Naive thymus-derived CD4-positive, alpha-beta T cell (primary cell): ENCODE measurements at regions of chr9 and their contacts with region 1.

Region 1: GRCh38 chr9:104386425-104387069 is 117.5 kb upstream of the OR13F1 start:
- DNase-seq: no peak
- ATAC-seq: no peak
- H3K4me3 ChIP-seq: no peak overlapping the region
- H3K4me3 Mint-ChIP-seq: no peak overlapping the region
- H3K27ac ChIP-seq: no peak overlapping the region
- H3K27ac Mint-ChIP-seq: no peak overlapping the region
- H3K4me1 ChIP-seq: no peaks in the 10 kb centered on the region
- H3K4me1 Mint-ChIP-seq: no peaks in the 10 kb centered on the region
- H3K27me3 ChIP-seq: no peaks in the 10 kb centered on the region
- H3K27me3 Mint-ChIP-seq: peaks cover 0 to 10% (median 7%) of the 10 kb centered on the region in 5 donors

Region 2: GRCh38 chr9:103397868-103398600 is 988.5 kb before region 1 on chr9:
- CTCF ChIA-PET with region 1: no interaction called
- POLR2A ChIA-PET with region 1: no interaction called
- intact Hi-C with region 1: loop called in 1 of 2 experiments (anchors 2 kb)
- DNase-seq: peak in 4 of 9 donors; percentile 2 to 23 (median 8)
- ATAC-seq: peak; percentile 57
- H3K4me3 ChIP-seq: no peak overlapping the region
- H3K4me3 Mint-ChIP-seq: no peak overlapping the region
- H3K27ac ChIP-seq: no peak overlapping the region
- H3K27ac Mint-ChIP-seq: no peak overlapping the region
- H3K4me1 ChIP-seq: no peaks in the 10 kb centered on the region
- H3K4me1 Mint-ChIP-seq: no peaks in the 10 kb centered on the region
- H3K27me3 ChIP-seq: no peaks in the 10 kb centered on the region
- H3K27me3 Mint-ChIP-seq: peaks cover 0 to 8% (median 0%) of the 10 kb centered on the region in 5 donors

Region 3: DNA sequence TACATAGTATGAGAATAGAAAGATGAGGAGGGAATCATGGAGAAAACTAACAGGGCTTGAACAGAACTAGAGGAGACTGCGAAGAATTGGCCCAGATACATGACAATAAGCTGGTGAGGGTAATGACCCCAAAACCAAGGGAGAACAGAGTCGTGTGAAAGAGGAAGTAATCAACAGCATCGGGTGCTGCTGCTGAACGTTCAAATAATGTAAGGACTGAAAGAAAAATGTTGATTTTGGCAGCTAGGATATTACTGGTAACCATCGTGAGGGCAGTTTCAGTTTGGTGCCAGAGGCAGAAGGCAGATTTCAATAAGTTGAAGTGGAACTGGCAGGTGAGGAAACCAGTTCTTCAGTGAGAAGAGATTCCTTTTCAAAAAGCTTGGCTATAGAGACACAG is 359.3 kb before region 1 on chr9:
- CTCF ChIA-PET with region 1: no interaction called
- POLR2A ChIA-PET with region 1: no interaction called
- intact Hi-C with region 1: loop called in 1 of 2 experiments (anchors 2 kb)
- DNase-seq: no peak
- ATAC-seq: peak; percentile 50
- H3K4me3 ChIP-seq: no peak overlapping the region
- H3K4me3 Mint-ChIP-seq: peak overlapping the region in 4 of 10 donors; percentile 2 to 27 (median 12)
- H3K27ac ChIP-seq: no peak overlapping the region
- H3K27ac Mint-ChIP-seq: peak overlapping the region in 1 of 9 donors; percentile 10
- H3K4me1 ChIP-seq: no peaks in the 10 kb centered on the region
- H3K4me1 Mint-ChIP-seq: peaks cover 8 to 22% (median 17%) of the 10 kb centered on the region in 7 donors
- H3K27me3 ChIP-seq: no peaks in the 10 kb centered on the region
- H3K27me3 Mint-ChIP-seq: peaks cover 0 to 11% (median 7%) of the 10 kb centered on the region in 5 donors

Region 4: DNA sequence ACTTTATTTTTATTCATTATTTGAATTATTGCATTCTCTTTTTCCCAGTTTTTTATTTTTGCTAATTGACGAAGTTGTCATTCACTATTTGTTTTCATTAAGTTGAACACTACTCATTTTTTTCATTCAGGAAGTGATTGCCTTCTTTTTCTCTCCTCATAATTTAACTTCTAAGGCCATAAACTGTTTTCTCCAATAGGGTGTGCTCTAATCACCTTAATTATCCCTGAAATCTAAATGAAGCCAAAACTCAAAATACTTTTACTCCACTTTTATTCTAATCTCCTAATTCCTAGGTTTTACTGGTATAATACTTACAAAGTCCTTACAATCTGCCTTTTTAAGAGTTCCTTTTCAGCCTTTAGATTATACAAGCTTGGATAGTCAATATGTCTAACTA is 221.8 kb after region 1 on chr9:
- CTCF ChIA-PET with region 1: no interaction called
- POLR2A ChIA-PET with region 1: no interaction called
- intact Hi-C with region 1: no loop called
- DNase-seq: no peak
- ATAC-seq: no peak
- H3K4me3 ChIP-seq: no peak overlapping the region
- H3K4me3 Mint-ChIP-seq: no peak overlapping the region
- H3K27ac ChIP-seq: no peak overlapping the region
- H3K27ac Mint-ChIP-seq: no peak overlapping the region
- H3K4me1 ChIP-seq: no peaks in the 10 kb centered on the region
- H3K4me1 Mint-ChIP-seq: no peaks in the 10 kb centered on the region
- H3K27me3 ChIP-seq: no peaks in the 10 kb centered on the region
- H3K27me3 Mint-ChIP-seq: peaks cover 0 to 9% (median 0%) of the 10 kb centered on the region in 5 donors